ENCODE measurements at regions of chr12 and their contacts with region 1.

Region 1: DNA sequence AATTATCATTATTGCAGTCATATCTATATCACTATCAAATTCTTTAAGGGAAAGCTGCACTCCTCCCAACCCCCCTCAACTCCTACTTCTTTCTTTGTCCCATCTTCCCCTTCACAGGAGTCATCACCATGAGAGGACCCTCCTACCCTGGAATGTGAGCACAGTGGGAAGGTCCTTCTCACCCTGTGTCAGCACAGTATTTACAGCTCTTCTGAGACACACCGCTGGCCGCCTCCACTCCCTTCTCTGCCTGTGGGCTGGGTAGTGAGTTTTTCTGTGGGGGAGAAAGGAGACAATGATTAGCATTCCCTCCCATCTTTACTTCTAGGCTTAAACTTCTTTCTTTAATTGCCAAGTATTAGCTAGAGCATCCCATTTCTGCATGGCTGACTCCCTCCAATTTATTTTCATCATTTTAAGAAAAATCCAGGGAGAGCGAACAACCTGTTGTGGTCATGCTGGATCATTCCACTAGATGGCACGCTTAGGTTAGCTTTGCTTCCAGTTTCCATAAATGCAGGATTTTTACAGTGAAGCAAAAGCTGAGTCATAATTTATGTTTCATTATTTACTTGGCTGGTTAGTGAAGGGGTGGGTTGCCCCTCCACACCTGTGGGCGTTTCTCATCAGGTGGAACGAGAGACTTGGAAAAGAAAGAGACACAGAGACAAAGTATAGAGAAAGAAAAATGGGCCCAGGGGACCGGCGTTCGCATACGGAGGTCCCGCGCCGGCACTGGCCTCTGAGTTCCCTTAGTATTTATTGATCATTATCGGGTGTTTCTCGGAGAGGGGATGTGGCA is 188.5 kb downstream of the ALX1 start:
- DNase-seq: peak; percentile 36
- ATAC-seq: peak; percentile 72; the same call in 1 of the 2 replicates
- H3K4me3 ChIP-seq: no peak overlapping the region
- H3K27ac ChIP-seq: no peak overlapping the region
- H3K4me1 ChIP-seq: no peaks in the 10 kb centered on the region
- H3K27me3 ChIP-seq: no peaks in the 10 kb centered on the region
- CTCF ChIP-seq: peak; percentile 72 to 81 (median 73); a peak in 5 of 6 replicates
- POLR2A ChIP-seq: no peak
- RAD21 ChIP-seq: peak; percentile 84

Region 2: GRCh38 chr12:85016423-85016822 is 452.1 kb before region 1 on chr12:
- CTCF ChIA-PET with region 1: no interaction called
- POLR2A ChIA-PET with region 1: no interaction called
- RAD21 ChIA-PET with region 1: no interaction called
- intact Hi-C with region 1: no loop called
- DNase-seq: peak; percentile 91
- ATAC-seq: peak; percentile 89
- H3K4me3 ChIP-seq: no peak overlapping the region
- H3K27ac ChIP-seq: no peak overlapping the region
- H3K4me1 ChIP-seq: peaks cover 4 to 8% of the 10 kb centered on the region in 2 experiments; a peak in 2 of 4 replicates
- H3K27me3 ChIP-seq: no peaks in the 10 kb centered on the region
- CTCF ChIP-seq: no peak
- POLR2A ChIP-seq: no peak
- RAD21 ChIP-seq: no peak

Region 3: GRCh38 chr12:85872497-85873091 is 404.0 kb after region 1 on chr12:
- CTCF ChIA-PET with region 1: interaction called, 9 read pairs
- POLR2A ChIA-PET with region 1: no interaction called
- RAD21 ChIA-PET with region 1: interaction called in 1 of 2 experiments, 3 read pairs
- intact Hi-C with region 1: loop called (anchors 2 kb)
- DNase-seq: peak; percentile 50
- ATAC-seq: peak; percentile 63
- H3K4me3 ChIP-seq: no peak overlapping the region
- H3K27ac ChIP-seq: no peak overlapping the region
- H3K4me1 ChIP-seq: no peaks in the 10 kb centered on the region
- H3K27me3 ChIP-seq: no peaks in the 10 kb centered on the region
- CTCF ChIP-seq: peak; percentile 54 to 73 (median 71); a peak in 5 of 6 replicates
- POLR2A ChIP-seq: no peak
- RAD21 ChIP-seq: peak; percentile 64

Region 4: DNA sequence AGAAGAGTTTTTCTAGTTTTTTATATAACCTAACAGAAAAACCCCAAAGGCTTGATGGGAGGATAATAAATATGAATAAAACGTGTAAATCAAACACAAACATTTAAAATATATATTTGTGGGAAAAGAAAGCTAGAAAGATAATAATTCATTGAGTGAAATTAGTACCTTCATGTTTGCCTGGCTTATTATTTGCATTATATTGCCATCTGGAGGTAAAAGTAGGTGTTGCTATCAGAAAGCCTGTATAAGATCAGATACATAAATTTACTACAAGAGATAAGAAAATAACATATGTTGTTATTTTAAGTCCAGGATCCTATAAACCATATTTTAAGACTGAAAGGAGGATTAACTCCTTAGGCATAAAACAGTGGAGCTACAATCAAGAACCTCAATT is 483.3 kb after region 1 on chr12:
- CTCF ChIA-PET with region 1: interaction called, 13 read pairs
- POLR2A ChIA-PET with region 1: no interaction called
- RAD21 ChIA-PET with region 1: interaction called in 1 of 2 experiments, 3 read pairs
- intact Hi-C with region 1: no loop called
- DNase-seq: peak; percentile 19
- ATAC-seq: no peak
- H3K4me3 ChIP-seq: no peak overlapping the region
- H3K27ac ChIP-seq: no peak overlapping the region
- H3K4me1 ChIP-seq: no peaks in the 10 kb centered on the region
- H3K27me3 ChIP-seq: no peaks in the 10 kb centered on the region
- CTCF ChIP-seq: peak; percentile 34 to 64 (median 40); a peak in 4 of 6 replicates
- POLR2A ChIP-seq: no peak
- RAD21 ChIP-seq: peak; percentile 65

Measured in HCT116 (cell line).